ENCODE measurements at regions of chr15 and their contacts with region 1.

Region 1: DNA sequence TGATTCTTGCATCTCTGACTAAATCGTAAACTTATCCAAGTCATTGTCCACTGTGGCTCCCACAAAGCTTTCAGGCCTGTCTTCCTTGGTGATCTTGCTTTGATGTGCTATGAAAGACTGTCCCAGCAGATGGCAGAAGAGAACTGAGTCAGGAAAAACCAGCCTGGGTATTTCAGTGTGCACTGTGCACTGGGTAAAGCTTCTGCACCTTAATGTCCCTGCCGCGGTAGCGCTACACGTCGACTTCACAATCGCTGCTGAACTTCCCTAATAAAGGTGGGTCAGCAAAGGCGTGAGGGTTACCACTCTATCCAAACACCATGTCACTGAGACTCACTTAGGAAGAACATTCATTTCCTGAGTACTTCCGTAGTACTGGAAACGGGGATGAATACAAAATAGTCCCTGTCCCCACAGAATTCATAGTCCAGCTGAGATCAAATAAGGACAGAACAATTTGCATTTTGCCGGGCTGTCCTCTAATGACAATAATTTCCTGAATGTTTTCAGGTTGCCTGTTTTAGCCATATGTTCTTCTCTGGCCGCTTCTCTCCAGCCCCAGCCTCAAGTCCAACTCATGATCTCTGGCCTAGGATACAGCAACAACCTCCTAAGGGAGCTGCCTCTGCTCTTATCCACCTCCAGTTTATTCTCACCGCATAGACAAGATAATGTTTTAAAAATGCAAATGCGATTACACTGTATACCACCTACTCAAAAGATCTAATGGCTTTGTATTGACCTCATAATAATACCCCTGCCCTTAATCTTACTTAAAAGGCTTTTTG is 83.6 kb upstream of the AKAP13 start:
- DNase-seq: peak in 5 of 6 donors; percentile 34 to 80 (median 60)
- ATAC-seq: peak; percentile 97 to 99 (median 98)
- H3K4me3 ChIP-seq: no peak overlapping the region
- H3K27ac ChIP-seq: no peak overlapping the region
- H3K4me1 ChIP-seq: peaks cover 0 to 4% (median 0%) of the 10 kb centered on the region in 3 donors
- H3K27me3 ChIP-seq: no peaks in the 10 kb centered on the region
- CTCF ChIP-seq: peak; percentile 26 to 61 (median 50)

Region 2: GRCh38 chr15:85504749-85505676 is 208.2 kb after region 1 on chr15:
- intact Hi-C with region 1: loop called in 1 of 3 experiments (anchors 10 kb)
- DNase-seq: peak in 2 of 6 donors; percentile 30 to 40
- ATAC-seq: peak; percentile 67 to 84 (median 82)
- H3K4me3 ChIP-seq: no peak overlapping the region
- H3K27ac ChIP-seq: no peak overlapping the region
- H3K4me1 ChIP-seq: no peaks in the 10 kb centered on the region
- H3K27me3 ChIP-seq: no peaks in the 10 kb centered on the region
- CTCF ChIP-seq: peak in 2 of 4 donors; percentile 28 to 36